ENCODE measurements at regions of chr3 and their contacts with region 1.

Region 1: GRCh38 chr3:94069194-94069813 is 6.4 kb downstream of the NSUN3 start:
- DNase-seq: peak; percentile 11
- H3K4me3 ChIP-seq: no peak overlapping the region
- H3K27ac ChIP-seq: no peak overlapping the region
- H3K4me1 ChIP-seq: no peaks in the 10 kb centered on the region; a peak in 2 of 4 replicates
- H3K27me3 ChIP-seq: no peaks in the 10 kb centered on the region
- CTCF ChIP-seq: peak; percentile 77
- EP300 ChIP-seq: no peak
- RAD21 ChIP-seq: peak; percentile 61

Region 2: GRCh38 chr3:93984618-93985017 is 84.7 kb before region 1 on chr3:
- CTCF ChIA-PET with region 1: interaction called, 10 read pairs
- POLR2A ChIA-PET with region 1: no interaction called
- DNase-seq: no peak
- H3K4me3 ChIP-seq: no peak overlapping the region
- H3K27ac ChIP-seq: no peak overlapping the region
- H3K4me1 ChIP-seq: peaks cover 6 to 20% of the 10 kb centered on the region in 2 experiments; a peak in 3 of 4 replicates
- H3K27me3 ChIP-seq: no peaks in the 10 kb centered on the region
- CTCF ChIP-seq: no peak
- EP300 ChIP-seq: no peak
- RAD21 ChIP-seq: no peak

Region 3: DNA sequence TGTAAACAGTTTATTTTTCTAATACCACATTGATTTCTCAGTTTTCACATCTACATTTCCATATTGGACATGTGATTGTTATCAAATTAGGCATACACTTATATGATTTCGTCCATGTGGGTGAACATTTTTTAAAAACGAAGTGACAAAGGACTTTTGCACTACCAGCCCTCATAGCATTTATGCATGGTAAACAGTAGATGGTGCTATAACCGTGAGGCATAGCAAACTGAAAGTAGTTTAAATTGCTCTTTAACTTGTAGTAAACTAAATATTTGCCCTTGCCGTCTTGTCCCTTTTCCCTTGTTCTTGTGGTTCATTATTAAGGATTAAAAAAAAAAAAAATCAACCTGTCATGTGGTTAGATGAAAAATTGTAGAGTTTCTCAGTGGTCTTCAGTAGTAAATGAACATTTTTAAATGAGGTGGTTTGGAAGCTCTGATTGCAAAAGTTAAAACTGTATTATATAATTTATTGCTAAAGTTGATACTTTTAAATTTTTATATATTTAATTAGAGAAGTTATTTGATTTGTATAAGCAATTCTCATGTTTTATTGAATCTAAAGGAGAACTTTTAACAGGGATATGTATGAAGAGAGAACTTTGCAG is 64.9 kb before region 1 on chr3:
- CTCF ChIA-PET with region 1: interaction called, 12 read pairs
- POLR2A ChIA-PET with region 1: no interaction called
- DNase-seq: peak; percentile 44
- H3K4me3 ChIP-seq: peak overlapping the region; percentile 29 to 57; a peak in 2 of 4 replicates
- H3K27ac ChIP-seq: peak overlapping the region in 1 of 2 experiments; percentile 16; a peak in 3 of 4 replicates
- H3K4me1 ChIP-seq: peaks cover 0 to 4% of the 10 kb centered on the region in 2 experiments; a peak in 1 of 4 replicates
- H3K27me3 ChIP-seq: no peaks in the 10 kb centered on the region
- CTCF ChIP-seq: peak; percentile 89
- EP300 ChIP-seq: no peak
- RAD21 ChIP-seq: peak; percentile 83

Region 4: DNA sequence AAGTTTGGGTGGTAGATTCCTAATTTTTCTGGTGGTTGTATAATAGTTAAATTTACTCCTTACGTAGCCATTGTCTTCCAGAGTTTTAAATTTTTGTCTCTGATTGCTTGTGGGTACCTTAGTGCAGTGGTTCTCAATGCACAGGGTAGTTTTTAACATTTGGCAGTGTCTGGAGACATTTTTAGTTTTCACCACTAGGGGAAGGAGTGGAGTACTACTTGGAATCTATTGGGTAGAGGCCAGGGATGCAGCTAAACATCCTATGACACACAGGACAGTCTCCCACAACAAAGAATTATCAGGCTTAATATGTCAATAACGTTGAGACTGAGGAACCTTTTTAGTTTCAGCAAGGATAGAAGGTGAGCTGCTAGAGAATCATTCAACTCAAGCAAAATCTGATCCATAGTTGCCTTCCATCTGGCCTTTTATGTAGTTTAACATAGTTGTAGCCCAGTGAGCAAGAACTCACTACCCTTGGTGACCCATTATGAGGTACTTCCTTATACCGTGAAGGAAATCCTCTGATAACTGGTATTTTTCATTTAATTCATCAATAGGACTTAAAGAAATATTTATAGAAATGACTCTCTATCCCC is 32.3 kb before region 1 on chr3:
- CTCF ChIA-PET with region 1: interaction called, 12 read pairs
- POLR2A ChIA-PET with region 1: no interaction called
- DNase-seq: peak; percentile 46
- H3K4me3 ChIP-seq: no peak overlapping the region
- H3K27ac ChIP-seq: no peak overlapping the region
- H3K4me1 ChIP-seq: no peaks in the 10 kb centered on the region
- H3K27me3 ChIP-seq: no peaks in the 10 kb centered on the region
- CTCF ChIP-seq: peak; percentile 63
- EP300 ChIP-seq: no peak
- RAD21 ChIP-seq: peak; percentile 18; the same call in 1 of the 2 replicates

Region 5: DNA sequence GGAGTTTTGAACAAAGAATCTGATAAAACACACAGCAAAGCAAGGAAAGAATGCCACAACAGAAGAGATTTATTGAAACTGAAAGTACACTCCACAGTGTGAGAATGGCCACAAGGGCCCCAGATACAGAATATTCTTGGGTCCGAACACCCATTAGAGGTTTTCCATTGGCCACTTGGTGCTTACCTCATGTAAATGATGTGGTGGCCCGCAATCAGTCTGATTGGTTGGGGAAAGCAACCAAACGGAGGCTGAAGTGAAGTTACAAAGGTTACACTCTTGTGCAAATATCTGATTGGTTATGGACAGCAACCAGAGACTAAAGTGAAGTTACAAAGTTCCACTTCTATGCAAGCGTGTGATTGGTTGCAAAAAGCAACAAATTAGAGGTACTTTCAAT is 14.0 kb after region 1 on chr3:
- CTCF ChIA-PET with region 1: interaction called, 22 read pairs
- POLR2A ChIA-PET with region 1: no interaction called
- DNase-seq: no peak
- H3K4me3 ChIP-seq: no peak overlapping the region
- H3K27ac ChIP-seq: no peak overlapping the region
- H3K4me1 ChIP-seq: no peaks in the 10 kb centered on the region
- H3K27me3 ChIP-seq: no peaks in the 10 kb centered on the region
- CTCF ChIP-seq: no peak
- EP300 ChIP-seq: no peak
- RAD21 ChIP-seq: no peak

Measured in SK-N-SH (cell line).